HEK293 (cell line): ENCODE measurements at regions of chr6 and their contacts with region 1.

Region 1: DNA sequence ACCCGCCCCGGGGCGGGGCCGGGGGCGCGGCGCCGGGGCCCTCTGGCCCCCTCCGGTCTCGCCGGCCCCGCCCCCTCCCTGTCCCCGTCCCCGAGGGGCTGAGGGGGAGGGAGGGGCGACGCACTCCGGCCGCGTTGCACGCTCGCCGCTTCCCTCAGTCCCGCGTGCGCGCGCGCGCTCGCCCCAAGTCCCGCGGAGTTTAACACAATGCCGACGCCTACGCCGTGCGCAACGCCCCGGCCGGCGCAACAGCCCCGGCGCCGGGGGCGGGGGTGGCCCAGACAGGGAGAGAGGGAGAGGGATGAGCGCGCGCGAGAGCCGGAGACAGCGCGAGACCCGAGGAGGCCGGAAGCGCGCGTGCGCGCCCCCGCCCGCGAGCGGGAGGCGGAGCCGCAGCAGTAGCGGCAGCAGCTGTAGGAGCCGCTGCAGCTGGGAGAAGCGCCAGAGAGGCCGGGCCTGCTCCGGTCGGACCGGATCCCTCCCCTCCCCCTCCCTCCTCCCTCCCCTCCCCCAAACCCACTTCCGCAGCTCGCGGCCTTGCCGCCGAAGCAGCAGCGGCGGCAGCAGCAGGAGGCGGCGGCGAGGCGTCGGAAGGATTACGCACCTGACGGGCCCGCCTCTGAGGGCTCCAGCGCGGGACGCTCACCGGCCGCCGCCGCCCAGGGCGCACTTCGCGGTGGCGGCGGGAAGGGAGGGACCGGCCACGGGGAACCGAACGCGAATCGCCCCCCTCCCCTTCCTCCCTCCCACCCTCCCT is 905 bp downstream of the ZBTB2 start:
- H3K4me3 ChIP-seq: peak overlapping the region; percentile 97
- H3K27ac ChIP-seq: peak overlapping the region; percentile 100
- H3K4me1 ChIP-seq: peaks cover 6% of the 10 kb centered on the region
- CTCF ChIP-seq: peak; percentile 7; the same call in 1 of the 2 replicates

Region 2: DNA sequence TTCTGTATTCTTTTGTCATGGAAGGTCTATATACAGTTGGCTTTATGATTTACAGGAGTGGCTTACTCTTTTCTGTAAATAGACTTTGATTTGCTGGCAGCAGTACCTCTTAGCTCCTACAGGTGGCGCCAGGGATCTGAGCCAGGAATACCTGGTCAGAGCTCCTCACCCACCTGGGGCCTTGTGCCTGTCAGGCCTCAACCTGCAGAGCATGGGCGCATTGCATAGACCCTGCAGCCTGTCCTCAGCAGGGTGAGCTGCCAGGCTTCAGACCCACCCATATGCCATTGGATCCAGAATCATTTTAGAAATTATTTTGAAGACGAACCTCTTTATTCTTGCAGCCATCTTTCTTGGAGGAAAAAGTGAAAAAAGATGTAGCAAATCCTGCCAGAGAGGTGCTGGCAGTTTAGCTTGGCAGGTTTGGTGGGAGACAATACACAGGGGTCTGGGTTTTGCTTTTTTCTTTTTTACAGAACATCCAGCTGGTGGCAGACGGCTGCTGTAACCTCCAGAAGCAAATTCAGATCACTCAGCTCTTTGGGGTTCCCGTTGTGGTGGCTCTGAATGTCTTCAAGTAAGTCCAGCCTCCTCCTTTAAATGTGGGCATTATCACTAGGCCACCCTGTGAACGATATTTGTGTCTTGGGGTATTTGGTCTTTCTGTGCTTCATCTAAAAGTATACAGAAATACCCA is 375.9 kb before region 1 on chr6:
- CTCF ChIA-PET with region 1: no interaction called
- POLR2A ChIA-PET with region 1: no interaction called
- H3K4me3 ChIP-seq: no peak overlapping the region
- H3K27ac ChIP-seq: no peak overlapping the region
- H3K4me1 ChIP-seq: no peaks in the 10 kb centered on the region
- CTCF ChIP-seq: peak; percentile 68

Region 3: DNA sequence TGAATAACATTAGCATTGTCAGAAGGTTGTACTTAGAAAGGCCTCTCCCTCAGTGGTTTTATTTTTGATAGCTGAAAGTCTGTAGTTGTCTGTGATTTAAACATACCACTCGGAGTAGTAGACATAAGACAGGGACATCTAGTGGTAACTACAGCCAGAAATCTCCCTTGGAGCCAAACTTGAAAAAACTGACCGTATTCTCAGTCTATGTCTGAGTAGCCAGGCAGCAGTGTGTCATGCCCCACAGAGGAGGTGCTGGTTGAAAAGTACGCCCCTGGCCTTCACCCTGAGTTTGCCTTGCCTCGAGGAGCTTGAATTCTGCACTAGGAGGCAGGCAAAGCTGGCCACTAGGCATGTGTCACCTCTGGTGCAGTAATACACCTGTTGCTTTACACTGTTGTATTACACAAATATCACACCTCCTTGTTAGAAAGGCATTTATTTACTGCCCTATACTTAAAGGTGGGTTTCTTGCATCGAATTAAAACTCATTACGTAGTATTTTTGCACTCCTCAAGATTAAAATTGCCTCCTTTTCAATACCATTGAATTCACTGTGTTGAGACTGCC is 19.9 kb before region 1 on chr6:
- CTCF ChIA-PET with region 1: interaction called, 3 read pairs
- POLR2A ChIA-PET with region 1: interaction called, 14 read pairs
- H3K4me3 ChIP-seq: no peak overlapping the region
- H3K27ac ChIP-seq: no peak overlapping the region
- H3K4me1 ChIP-seq: peaks cover 7% of the 10 kb centered on the region
- CTCF ChIP-seq: no peak

Region 4: GRCh38 chr6:151409260-151409659 is 18.8 kb after region 1 on chr6:
- CTCF ChIA-PET with region 1: interaction called, 12 read pairs
- POLR2A ChIA-PET with region 1: interaction called, 11 read pairs
- H3K4me3 ChIP-seq: no peak overlapping the region
- H3K27ac ChIP-seq: no peak overlapping the region
- H3K4me1 ChIP-seq: no peaks in the 10 kb centered on the region
- CTCF ChIP-seq: no peak

Region 5: DNA sequence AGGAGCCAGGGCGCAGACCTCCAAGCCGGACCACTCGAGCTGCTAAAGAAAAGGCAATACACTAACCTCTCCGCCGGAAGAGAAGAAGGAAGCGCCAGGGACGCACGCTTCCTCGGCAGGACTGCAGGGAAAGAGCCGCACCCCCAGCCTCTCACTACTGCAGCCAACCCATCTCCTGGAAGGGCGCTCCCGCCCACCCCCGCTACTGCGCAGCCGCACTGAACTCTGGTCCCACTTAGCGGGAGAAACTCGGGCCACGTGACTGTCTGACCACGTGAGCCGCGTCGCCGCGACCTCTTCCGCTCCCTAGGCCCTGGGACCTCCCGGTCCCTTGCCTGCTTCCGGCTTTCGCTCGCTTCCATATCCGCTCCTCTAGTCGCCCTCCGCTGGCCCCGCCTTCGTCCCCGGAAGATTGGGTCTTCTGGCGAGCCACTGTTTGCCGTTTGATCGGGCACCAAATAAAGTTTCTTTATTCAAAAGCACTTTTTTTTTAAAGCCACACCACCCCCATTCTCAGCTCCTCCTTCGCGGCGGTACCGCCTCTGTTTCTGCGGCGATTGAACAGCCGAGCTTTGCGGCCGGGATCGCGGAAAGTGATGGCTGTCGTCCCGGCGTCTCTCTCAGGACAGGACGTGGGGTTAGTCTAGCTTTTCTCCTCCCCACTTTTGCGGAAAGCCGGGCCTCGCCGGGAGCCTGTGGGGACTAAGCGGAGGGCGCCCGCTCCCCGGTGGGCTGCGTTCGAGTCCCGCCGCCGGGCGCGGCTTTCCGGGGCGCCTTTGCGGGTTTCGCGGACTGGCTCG is 61.7 kb after region 1 on chr6 and contains the start of gene RMND1:
- CTCF ChIA-PET with region 1: interaction called, 3 read pairs
- POLR2A ChIA-PET with region 1: interaction called, 22 read pairs
- H3K4me3 ChIP-seq: peak within 1 kb of the TSS; percentile 97
- H3K27ac ChIP-seq: peak within 1 kb of the TSS; percentile 85
- H3K4me1 ChIP-seq: peaks cover 4% of the 10 kb centered on the region; the same call in 1 of the 2 replicates
- CTCF ChIP-seq: no peak